PC-9 (cell line): ENCODE measurements at regions of chr7 and their contacts with region 1.

Region 1: GRCh38 chr7:19121977-19122588 is 4.6 kb upstream of the TWIST1 start:
- DNase-seq: no peak
- H3K4me3 ChIP-seq: no peak overlapping the region
- H3K27ac ChIP-seq: no peak overlapping the region
- H3K4me1 ChIP-seq: no peaks in the 10 kb centered on the region
- H3K27me3 ChIP-seq: no peaks in the 10 kb centered on the region
- CTCF ChIP-seq: peak; percentile 85

Region 2: GRCh38 chr7:18693406-18693805 is 428.7 kb before region 1 on chr7:
- CTCF ChIA-PET with region 1: no interaction called
- POLR2A ChIA-PET with region 1: no interaction called
- intact Hi-C with region 1: loop called (anchors 5 kb)
- DNase-seq: no peak
- H3K4me3 ChIP-seq: no peak overlapping the region
- H3K27ac ChIP-seq: no peak overlapping the region
- H3K4me1 ChIP-seq: no peaks in the 10 kb centered on the region
- H3K27me3 ChIP-seq: no peaks in the 10 kb centered on the region
- CTCF ChIP-seq: peak; percentile 58

Region 3: GRCh38 chr7:19009241-19009935 is 112.7 kb before region 1 on chr7:
- CTCF ChIA-PET with region 1: no interaction called
- POLR2A ChIA-PET with region 1: no interaction called
- intact Hi-C with region 1: no loop called
- DNase-seq: no peak
- H3K4me3 ChIP-seq: no peak overlapping the region
- H3K27ac ChIP-seq: no peak overlapping the region
- H3K4me1 ChIP-seq: no peaks in the 10 kb centered on the region
- H3K27me3 ChIP-seq: no peaks in the 10 kb centered on the region
- CTCF ChIP-seq: no peak

Region 4: GRCh38 chr7:19552576-19552975 is 430.5 kb after region 1 on chr7:
- CTCF ChIA-PET with region 1: no interaction called
- POLR2A ChIA-PET with region 1: no interaction called
- intact Hi-C with region 1: loop called (anchors 1 kb)
- DNase-seq: no peak
- H3K4me3 ChIP-seq: no peak overlapping the region
- H3K27ac ChIP-seq: no peak overlapping the region
- H3K4me1 ChIP-seq: no peaks in the 10 kb centered on the region
- H3K27me3 ChIP-seq: no peaks in the 10 kb centered on the region
- CTCF ChIP-seq: no peak

Region 5: GRCh38 chr7:19621740-19622139 is 499.7 kb after region 1 on chr7:
- CTCF ChIA-PET with region 1: no interaction called
- POLR2A ChIA-PET with region 1: no interaction called
- intact Hi-C with region 1: loop called (anchors 1 kb)
- DNase-seq: no peak
- H3K4me3 ChIP-seq: no peak overlapping the region
- H3K27ac ChIP-seq: no peak overlapping the region
- H3K4me1 ChIP-seq: no peaks in the 10 kb centered on the region
- H3K27me3 ChIP-seq: no peaks in the 10 kb centered on the region
- CTCF ChIP-seq: peak; percentile 32; the same call in 1 of the 2 replicates

Region 6: DNA sequence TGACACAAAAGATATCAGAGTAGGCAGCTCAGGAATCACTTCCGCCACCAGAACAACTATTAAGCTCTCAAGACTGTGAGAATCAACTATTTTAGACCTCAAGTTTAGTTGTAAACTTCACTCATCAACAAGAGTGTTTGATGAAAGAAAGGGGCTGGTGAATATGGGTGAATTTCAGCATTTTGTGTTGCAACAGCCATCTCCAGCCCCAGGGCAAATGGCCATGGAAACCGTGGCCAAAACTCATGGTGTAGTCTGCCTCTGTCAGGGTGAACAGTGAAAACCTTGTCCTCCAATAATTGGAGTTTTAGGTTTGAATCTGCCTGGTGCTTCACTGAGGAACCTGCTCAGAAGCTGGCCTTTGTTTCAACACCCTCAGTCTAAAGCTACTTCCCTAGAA is 526.7 kb after region 1 on chr7:
- CTCF ChIA-PET with region 1: no interaction called
- POLR2A ChIA-PET with region 1: no interaction called
- intact Hi-C with region 1: no loop called
- DNase-seq: peak in 1 of 2 experiments; percentile 46
- H3K4me3 ChIP-seq: no peak overlapping the region
- H3K27ac ChIP-seq: no peak overlapping the region
- H3K4me1 ChIP-seq: no peaks in the 10 kb centered on the region
- H3K27me3 ChIP-seq: no peaks in the 10 kb centered on the region
- CTCF ChIP-seq: no peak

Region 7: DNA sequence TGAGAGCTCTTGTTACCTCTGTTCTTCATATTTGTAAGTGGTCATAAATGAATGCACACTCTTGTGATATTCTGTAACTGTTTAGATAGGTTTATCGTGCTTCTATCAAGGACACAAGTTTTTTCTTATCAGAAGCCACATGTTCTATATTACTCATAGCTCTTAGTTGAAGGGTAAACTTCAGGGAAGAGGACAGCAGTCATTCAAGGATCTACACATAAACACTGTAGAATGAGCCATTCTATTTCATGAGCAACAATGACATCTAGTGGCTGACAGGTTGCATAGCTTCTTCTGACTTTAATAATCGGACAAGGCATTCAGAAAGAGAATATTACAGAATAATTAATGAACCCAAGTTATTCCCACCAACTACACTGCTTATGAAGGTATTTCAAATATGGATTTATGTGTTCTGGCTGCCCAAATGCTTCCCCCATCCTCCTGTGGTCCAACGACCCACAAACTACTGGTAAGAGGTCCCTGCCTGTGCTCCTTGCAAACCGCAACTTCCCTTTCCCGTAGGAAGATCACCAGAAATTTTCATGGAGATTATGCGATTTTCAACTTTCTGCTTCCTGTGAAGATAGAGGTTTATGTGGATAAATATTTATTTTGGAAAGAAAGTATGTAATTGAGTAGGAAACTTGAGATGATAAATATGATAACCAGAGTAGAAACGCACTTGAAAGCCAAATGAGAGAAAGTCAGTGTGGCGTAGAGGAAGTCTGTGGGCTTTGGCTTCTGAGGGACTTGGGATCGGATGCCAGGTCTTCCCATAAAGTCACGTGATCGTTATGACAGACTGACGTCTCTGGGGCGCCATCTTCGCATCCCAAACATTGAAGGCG is 1476.6 kb after region 1 on chr7:
- CTCF ChIA-PET with region 1: interaction called, 3 read pairs
- POLR2A ChIA-PET with region 1: no interaction called
- intact Hi-C with region 1: loop called (anchors 5 kb)
- DNase-seq: peak; percentile 4 to 71
- H3K4me3 ChIP-seq: no peak overlapping the region
- H3K27ac ChIP-seq: no peak overlapping the region
- H3K4me1 ChIP-seq: no peaks in the 10 kb centered on the region; the same call in 1 of the 2 replicates
- H3K27me3 ChIP-seq: no peaks in the 10 kb centered on the region
- CTCF ChIP-seq: peak; percentile 97